ENCODE measurements at regions of chrX and their contacts with region 1.

Region 1: GRCh38 chrX:119549327-119550016 is 15.7 kb downstream of the STEEP1 start:
- DNase-seq: peak; percentile 8
- ATAC-seq: peak; percentile 87
- H3K4me3 ChIP-seq: 0 out of 2 replicates have a peak overlapping the region, but pooled peaks have one; percentile 10
- H3K27ac ChIP-seq: peak overlapping the region; percentile 65
- H3K4me1 ChIP-seq: no peaks in the 10 kb centered on the region
- H3K27me3 ChIP-seq: no peaks in the 10 kb centered on the region
- CTCF ChIP-seq: no peak
- EP300 ChIP-seq: 0 out of 4 replicates have a peak, but pooled peaks of 1 of the 2 experiments have one; percentile 26
- POLR2A ChIP-seq: no peak
- RAD21 ChIP-seq: no peak

Region 2: DNA sequence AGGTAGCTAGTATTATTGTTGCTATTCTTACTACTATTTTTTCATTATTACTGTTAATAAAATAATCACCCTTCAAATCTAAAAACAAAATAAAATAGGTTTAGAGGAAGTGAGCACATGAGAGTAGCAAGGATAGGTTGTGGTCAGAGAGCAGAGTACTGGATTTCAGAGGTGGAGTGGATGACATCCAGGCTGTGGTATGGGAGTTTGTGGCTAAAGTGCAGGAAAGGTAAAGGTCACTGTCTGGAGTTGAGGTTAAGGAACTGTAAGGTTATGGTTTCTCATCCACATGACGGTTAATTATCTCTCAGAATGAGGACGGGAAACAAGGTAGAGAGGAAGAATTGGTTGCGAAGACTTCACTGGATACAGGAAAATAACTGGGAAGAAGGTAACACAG is 12.0 kb before region 1 on chrX:
- CTCF ChIA-PET with region 1: no interaction called
- POLR2A ChIA-PET with region 1: no interaction called
- RAD21 ChIA-PET with region 1: no interaction called
- SMC1A ChIA-PET with region 1: no interaction called
- in situ Hi-C with region 1: no loop called
- intact Hi-C with region 1: no loop called
- DNase-seq: no peak
- ATAC-seq: no peak
- H3K4me3 ChIP-seq: no peak overlapping the region
- H3K27ac ChIP-seq: no peak overlapping the region
- H3K4me1 ChIP-seq: no peaks in the 10 kb centered on the region
- H3K27me3 ChIP-seq: no peaks in the 10 kb centered on the region
- CTCF ChIP-seq: no peak
- EP300 ChIP-seq: no peak
- POLR2A ChIP-seq: no peak
- RAD21 ChIP-seq: no peak

Region 3: DNA sequence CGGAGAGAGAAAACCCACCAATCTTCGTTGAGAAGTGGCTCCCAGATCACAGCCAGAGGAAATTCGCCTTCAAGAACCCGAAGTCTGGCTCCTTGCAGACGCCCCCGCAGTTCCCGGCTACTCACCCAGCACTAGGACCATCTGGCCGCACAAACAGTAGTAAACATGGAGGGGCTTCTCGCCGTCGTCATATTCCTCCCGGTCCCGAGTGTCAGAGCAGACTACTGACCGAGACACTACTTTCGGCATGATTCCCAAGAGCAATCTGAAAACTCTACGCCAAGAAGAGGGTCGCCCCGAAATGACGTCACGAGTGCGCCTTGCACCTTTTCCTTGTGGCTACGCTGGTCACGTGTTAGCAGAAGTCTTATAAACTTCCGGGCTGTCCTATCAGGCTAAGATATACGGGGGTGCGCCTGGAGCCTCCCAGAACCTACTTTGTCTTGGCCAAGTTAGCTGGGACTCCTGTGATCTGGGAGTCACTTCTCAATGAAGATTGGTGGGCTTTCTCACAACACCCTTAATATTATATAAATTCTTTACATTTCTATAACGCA is 15.7 kb after region 1 on chrX and contains the start of gene STEEP1:
- CTCF ChIA-PET with region 1: interaction called, 4 read pairs
- POLR2A ChIA-PET with region 1: interaction called, 3 read pairs
- RAD21 ChIA-PET with region 1: interaction called, 5 read pairs
- SMC1A ChIA-PET with region 1: interaction called, 15 read pairs
- in situ Hi-C with region 1: no loop called
- intact Hi-C with region 1: no loop called
- DNase-seq: peak; percentile 71
- ATAC-seq: peak; percentile 97
- H3K4me3 ChIP-seq: peak within 1 kb of the TSS; percentile 60
- H3K27ac ChIP-seq: peak within 1 kb of the TSS; percentile 50; the same call in 1 of the 2 replicates
- H3K4me1 ChIP-seq: no peaks in the 10 kb centered on the region
- H3K27me3 ChIP-seq: no peaks in the 10 kb centered on the region; a peak in 1 of 4 replicates
- CTCF ChIP-seq: no peak
- EP300 ChIP-seq: 0 out of 4 replicates have a peak, but pooled peaks of 1 of the 2 experiments have one; percentile 11
- POLR2A ChIP-seq: peak; percentile 61
- RAD21 ChIP-seq: no peak
- polyA plus RNA-seq, gene STEEP1: 15.1 to 17.8 TPM

Region 4: DNA sequence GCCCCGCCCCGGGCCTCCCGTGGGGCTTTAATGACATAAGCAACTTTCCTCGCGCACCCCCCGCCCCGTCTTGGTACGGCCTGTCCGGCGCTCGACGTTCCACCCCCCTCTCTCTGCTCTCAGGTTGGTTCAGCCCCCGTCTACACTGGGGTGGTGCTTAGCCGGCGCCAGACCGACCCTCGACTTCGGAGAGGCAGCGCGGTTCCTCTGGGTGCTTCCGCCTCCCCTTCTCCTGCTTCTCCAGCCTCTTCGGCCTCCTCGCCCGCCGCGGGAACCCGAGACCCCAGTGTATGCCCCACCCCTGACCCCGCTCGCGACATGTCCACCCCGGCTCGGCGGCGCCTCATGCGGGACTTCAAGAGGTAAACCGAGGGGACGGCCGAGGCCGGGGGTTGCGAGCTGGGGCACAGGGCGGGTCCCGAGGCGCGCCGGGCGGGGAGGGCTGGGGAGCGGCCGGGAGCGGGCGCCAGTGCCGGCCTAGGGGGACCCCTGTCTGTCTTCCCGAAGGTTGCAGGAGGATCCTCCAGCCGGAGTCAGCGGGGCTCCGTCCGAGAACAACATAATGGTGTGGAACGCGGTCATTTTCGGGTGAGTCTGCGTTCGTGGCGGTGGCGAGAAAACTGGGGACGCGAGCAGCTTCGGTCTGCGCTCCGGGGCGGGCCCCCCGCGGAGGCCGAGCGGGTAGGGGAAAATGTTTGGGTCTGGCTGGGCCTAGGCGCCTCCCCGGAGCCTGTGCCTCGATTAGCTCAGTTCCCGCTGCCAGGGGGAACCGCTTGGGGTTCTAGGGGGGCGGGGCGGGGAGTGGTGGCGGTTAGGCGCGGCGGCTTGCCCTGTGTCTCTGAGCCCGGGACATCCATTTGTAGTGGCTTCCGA is 25.2 kb after region 1 on chrX and contains the start of gene UBE2A:
- CTCF ChIA-PET with region 1: interaction called, 3 read pairs
- POLR2A ChIA-PET with region 1: interaction called, 8 read pairs
- RAD21 ChIA-PET with region 1: interaction called, 4 read pairs
- SMC1A ChIA-PET with region 1: interaction called, 11 read pairs
- in situ Hi-C with region 1: no loop called
- intact Hi-C with region 1: no loop called
- DNase-seq: peak; percentile 53
- ATAC-seq: peak; percentile 89
- H3K4me3 ChIP-seq: peak within 1 kb of the TSS; percentile 76
- H3K27ac ChIP-seq: peak within 1 kb of the TSS; percentile 55
- H3K4me1 ChIP-seq: no peaks in the 10 kb centered on the region; the same call in 1 of the 2 replicates
- H3K27me3 ChIP-seq: no peaks in the 10 kb centered on the region
- CTCF ChIP-seq: peak; percentile 24 to 40 (median 32); a peak in 2 of 6 replicates
- EP300 ChIP-seq: no peak
- POLR2A ChIP-seq: peak; percentile 99
- RAD21 ChIP-seq: 0 out of 2 replicates have a peak, but pooled peaks have one; percentile 12
- polyA plus RNA-seq, gene UBE2A: 20.8 to 37.1 TPM